Panc1 (cell line): ENCODE measurements at regions of chr3 and their contacts with region 1.

Region 1: DNA sequence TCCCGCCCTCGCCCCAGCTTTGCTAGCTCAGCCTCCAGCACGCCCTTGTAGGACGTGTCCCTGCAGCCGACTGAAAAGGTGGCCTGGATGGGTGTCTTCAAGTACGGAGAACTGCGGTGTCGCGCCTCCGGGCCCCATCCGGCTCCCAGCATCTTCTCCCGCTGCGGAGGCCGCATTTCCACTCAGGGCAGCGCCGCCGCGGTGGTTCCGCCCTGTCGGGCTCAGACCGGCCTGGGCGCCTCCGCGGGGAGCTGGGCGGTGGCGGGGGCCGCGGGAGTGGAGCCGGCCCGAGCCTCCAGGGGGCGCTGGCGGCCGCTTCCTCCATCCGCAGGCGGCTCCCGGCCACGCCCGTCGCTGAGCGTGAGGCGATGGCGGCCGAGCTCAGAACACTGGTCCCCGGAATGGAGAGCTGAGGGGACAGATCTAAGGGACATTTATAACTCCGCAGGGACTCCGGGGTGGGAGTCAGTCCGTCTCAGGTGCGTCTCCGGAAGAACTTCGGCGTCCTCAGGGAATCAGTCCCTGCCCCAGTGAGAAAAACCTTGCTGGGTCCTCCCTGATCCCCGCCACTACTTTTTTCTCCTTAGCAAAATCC is 13.6 kb upstream of the SMCO1 start:
- DNase-seq: no peak
- ATAC-seq: no peak
- H3K4me3 ChIP-seq: no peak overlapping the region; a peak in 1 of 4 replicates
- H3K27ac ChIP-seq: no peak overlapping the region
- H3K4me1 ChIP-seq: no peaks in the 10 kb centered on the region
- H3K27me3 ChIP-seq: no peaks in the 10 kb centered on the region
- CTCF ChIP-seq: peak; percentile 58

Region 2: GRCh38 chr3:196020373-196020772 is 508.4 kb before region 1 on chr3:
- CTCF ChIA-PET with region 1: no interaction called
- POLR2A ChIA-PET with region 1: no interaction called
- in situ Hi-C with region 1: no loop called
- intact Hi-C with region 1: loop called (anchors 5 kb)
- DNase-seq: no peak
- ATAC-seq: no peak
- H3K4me3 ChIP-seq: no peak overlapping the region
- H3K27ac ChIP-seq: no peak overlapping the region
- H3K4me1 ChIP-seq: no peaks in the 10 kb centered on the region
- H3K27me3 ChIP-seq: no peaks in the 10 kb centered on the region; the same call in 1 of the 2 replicates
- CTCF ChIP-seq: no peak

Region 3: GRCh38 chr3:196684548-196685407 is 156.0 kb after region 1 on chr3:
- CTCF ChIA-PET with region 1: interaction called, 7 read pairs
- POLR2A ChIA-PET with region 1: no interaction called
- in situ Hi-C with region 1: no loop called
- intact Hi-C with region 1: loop called (anchors 2 kb)
- DNase-seq: peak; percentile 52
- ATAC-seq: peak; percentile 90
- H3K4me3 ChIP-seq: peak overlapping the region in 1 of 2 experiments; percentile 11; a peak in 1 of 4 replicates
- H3K27ac ChIP-seq: peak overlapping the region; percentile 49
- H3K4me1 ChIP-seq: peaks cover 7% of the 10 kb centered on the region
- H3K27me3 ChIP-seq: no peaks in the 10 kb centered on the region
- CTCF ChIP-seq: peak; percentile 93

Region 4: GRCh38 chr3:196969660-196970546 is 441.2 kb after region 1 on chr3:
- CTCF ChIA-PET with region 1: no interaction called
- POLR2A ChIA-PET with region 1: no interaction called
- in situ Hi-C with region 1: no loop called
- intact Hi-C with region 1: loop called (anchors 10 kb)
- DNase-seq: no peak
- ATAC-seq: peak; percentile 88
- H3K4me3 ChIP-seq: peak overlapping the region; percentile 52 to 72
- H3K27ac ChIP-seq: no peak overlapping the region
- H3K4me1 ChIP-seq: peaks cover 12% of the 10 kb centered on the region
- H3K27me3 ChIP-seq: no peaks in the 10 kb centered on the region
- CTCF ChIP-seq: peak; percentile 100